ENCODE measurements at regions of chr12 and their contacts with region 1.

Region 1: DNA sequence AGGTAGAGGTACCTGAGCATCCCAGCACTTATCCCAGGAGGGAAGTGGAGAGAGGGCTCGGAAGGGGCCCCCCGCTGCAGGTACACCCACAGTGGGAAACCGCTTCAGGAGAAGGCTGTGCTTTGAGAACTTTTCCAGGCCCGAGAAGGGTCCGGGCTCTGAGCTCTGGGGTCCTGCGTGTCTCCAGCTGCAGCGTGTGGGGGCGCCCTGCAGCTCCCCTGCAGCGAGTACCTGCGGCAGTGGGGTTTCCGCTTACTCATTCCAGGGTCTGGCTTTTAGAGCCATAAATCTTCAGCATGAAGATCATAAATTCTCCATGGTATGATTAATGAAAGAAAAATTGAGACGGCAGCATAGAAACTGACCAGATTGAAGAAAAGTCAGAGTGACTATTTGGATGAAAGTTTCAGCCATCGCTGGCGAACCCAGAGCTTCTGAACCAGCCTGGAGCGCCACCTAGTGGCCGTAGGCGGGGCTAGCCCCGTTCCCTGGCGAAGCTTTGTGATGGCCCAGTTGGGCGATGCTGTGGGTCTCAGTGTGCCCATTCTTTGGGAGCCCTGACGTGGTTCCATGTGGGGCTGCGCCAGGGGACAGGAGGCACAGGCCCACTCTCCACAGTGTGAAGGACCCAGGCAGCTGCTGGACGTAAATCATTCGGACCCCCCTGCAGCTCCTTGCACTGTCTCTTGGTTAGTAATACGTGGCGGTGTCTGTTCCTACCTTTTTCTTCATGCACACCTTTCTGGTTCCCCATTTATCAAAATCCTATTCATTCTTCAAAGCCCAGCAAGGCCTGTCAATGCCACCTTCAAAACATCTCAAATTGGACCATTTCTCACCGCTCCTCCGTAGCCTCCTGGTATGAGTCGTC is 198.2 kb downstream of the TSPAN9 start:
- DNase-seq: peak; percentile 40 to 84 (median 64)
- ATAC-seq: peak; percentile 58
- H3K4me3 ChIP-seq: no peak overlapping the region
- H3K4me3 Mint-ChIP-seq: peak overlapping the region; percentile 22
- H3K27ac ChIP-seq: no peak overlapping the region
- H3K27ac Mint-ChIP-seq: no peak overlapping the region
- H3K4me1 ChIP-seq: no peaks in the 10 kb centered on the region
- H3K4me1 Mint-ChIP-seq: no peaks in the 10 kb centered on the region
- H3K27me3 ChIP-seq: no peaks in the 10 kb centered on the region
- H3K27me3 Mint-ChIP-seq: peaks cover 21% of the 10 kb centered on the region
- CTCF ChIP-seq: peak; percentile 89

Region 2: GRCh38 chr12:2845280-2845679 is 430.1 kb before region 1 on chr12:
- CTCF ChIA-PET with region 1: no interaction called
- POLR2A ChIA-PET with region 1: no interaction called
- intact Hi-C with region 1: loop called in 1 of 2 experiments (anchors 5 kb)
- DNase-seq: no peak
- ATAC-seq: no peak
- H3K4me3 ChIP-seq: no peak overlapping the region
- H3K4me3 Mint-ChIP-seq: no peak overlapping the region
- H3K27ac ChIP-seq: no peak overlapping the region
- H3K27ac Mint-ChIP-seq: no peak overlapping the region
- H3K4me1 ChIP-seq: no peaks in the 10 kb centered on the region
- H3K4me1 Mint-ChIP-seq: peaks cover 4% of the 10 kb centered on the region
- H3K27me3 ChIP-seq: no peaks in the 10 kb centered on the region
- H3K27me3 Mint-ChIP-seq: no peaks in the 10 kb centered on the region
- CTCF ChIP-seq: no peak

Region 3: DNA sequence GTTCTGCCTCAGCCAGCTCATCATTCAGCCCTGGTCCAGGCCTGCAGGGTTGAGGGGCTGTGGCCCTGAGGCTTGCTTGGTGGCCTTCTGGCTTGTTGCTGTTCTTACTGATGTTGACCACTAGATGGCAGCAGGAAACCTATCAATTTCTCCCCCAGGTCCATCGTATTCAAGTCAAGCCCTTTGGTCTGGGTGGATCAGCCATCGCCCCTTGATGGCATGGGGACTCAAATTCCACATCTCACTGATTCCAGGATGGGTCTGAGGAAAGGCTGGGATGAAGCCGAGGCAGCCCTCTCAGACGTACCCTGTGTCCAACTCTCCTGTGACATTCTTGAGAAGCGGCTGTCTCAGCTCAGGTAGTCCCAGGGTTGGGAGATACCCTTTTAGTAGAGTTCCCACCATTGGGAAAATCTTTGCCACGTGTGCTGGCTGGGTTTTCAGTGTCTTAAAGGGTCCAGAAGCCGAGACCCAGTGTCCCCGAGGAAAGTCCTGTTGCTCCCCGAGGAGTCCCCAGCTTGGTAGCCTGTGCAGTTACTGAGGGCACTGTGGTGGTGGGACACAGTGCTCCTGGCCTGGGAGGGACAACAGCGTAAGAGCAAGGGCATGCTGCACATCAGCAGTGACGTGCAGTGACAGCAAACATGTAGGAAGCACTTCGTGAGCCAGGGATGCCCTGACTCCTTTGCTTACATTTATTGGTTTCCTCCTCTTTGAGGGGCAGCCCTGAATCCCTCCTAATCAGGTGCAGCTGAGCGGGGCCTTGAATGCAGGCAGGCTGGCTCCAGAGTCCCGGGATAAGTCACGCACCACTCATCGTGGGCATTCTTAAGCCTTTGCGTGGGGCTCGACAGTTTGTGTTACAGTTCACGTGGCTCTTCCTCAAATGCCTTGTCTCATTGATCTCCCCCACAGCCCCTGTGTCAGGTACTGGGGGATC is 139.6 kb before region 1 on chr12:
- CTCF ChIA-PET with region 1: interaction called, 37 read pairs
- POLR2A ChIA-PET with region 1: no interaction called
- intact Hi-C with region 1: loop called in 1 of 2 experiments (anchors 1 kb)
- DNase-seq: peak in 7 of 9 experiments; percentile 3 to 72 (median 34)
- ATAC-seq: peak; percentile 49
- H3K4me3 ChIP-seq: no peak overlapping the region
- H3K4me3 Mint-ChIP-seq: no peak overlapping the region
- H3K27ac ChIP-seq: no peak overlapping the region
- H3K27ac Mint-ChIP-seq: no peak overlapping the region
- H3K4me1 ChIP-seq: no peaks in the 10 kb centered on the region
- H3K4me1 Mint-ChIP-seq: peaks cover 3% of the 10 kb centered on the region
- H3K27me3 ChIP-seq: peaks cover 3 to 5% of the 10 kb centered on the region in 2 experiments
- H3K27me3 Mint-ChIP-seq: peaks cover 50% of the 10 kb centered on the region
- CTCF ChIP-seq: peak; percentile 78

Region 4: GRCh38 chr12:3213188-3213587 is 62.2 kb before region 1 on chr12:
- CTCF ChIA-PET with region 1: no interaction called
- POLR2A ChIA-PET with region 1: no interaction called
- intact Hi-C with region 1: no loop called
- DNase-seq: no peak
- ATAC-seq: no peak
- H3K4me3 ChIP-seq: no peak overlapping the region
- H3K4me3 Mint-ChIP-seq: no peak overlapping the region
- H3K27ac ChIP-seq: no peak overlapping the region
- H3K27ac Mint-ChIP-seq: no peak overlapping the region
- H3K4me1 ChIP-seq: no peaks in the 10 kb centered on the region
- H3K4me1 Mint-ChIP-seq: no peaks in the 10 kb centered on the region
- H3K27me3 ChIP-seq: no peaks in the 10 kb centered on the region
- H3K27me3 Mint-ChIP-seq: no peaks in the 10 kb centered on the region
- CTCF ChIP-seq: no peak

Region 5: DNA sequence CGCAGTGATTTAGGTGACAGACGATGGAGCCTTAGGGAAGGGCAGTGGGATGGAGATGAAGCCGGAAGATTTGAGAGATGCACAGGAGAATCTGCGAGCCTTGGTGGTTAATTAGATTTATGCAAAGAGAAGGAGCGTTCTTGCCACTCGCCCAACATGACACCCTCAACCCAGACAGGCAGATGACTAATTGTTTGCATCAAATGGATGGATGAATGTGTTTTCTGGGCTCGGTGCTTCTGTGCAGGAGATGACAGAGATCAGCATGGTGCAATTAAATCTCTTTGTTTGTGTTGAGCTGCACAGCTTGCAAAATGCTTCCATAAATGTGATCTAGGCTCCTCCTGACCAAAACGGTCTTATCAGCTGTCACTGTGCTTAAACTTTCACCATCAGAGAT is 13.3 kb after region 1 on chr12:
- CTCF ChIA-PET with region 1: interaction called, 15 read pairs
- POLR2A ChIA-PET with region 1: no interaction called
- intact Hi-C with region 1: no loop called
- DNase-seq: no peak
- ATAC-seq: no peak
- H3K4me3 ChIP-seq: no peak overlapping the region
- H3K4me3 Mint-ChIP-seq: no peak overlapping the region
- H3K27ac ChIP-seq: no peak overlapping the region
- H3K27ac Mint-ChIP-seq: peak overlapping the region; percentile 49
- H3K4me1 ChIP-seq: no peaks in the 10 kb centered on the region
- H3K4me1 Mint-ChIP-seq: no peaks in the 10 kb centered on the region
- H3K27me3 ChIP-seq: no peaks in the 10 kb centered on the region
- H3K27me3 Mint-ChIP-seq: no peaks in the 10 kb centered on the region
- CTCF ChIP-seq: no peak

Region 6: GRCh38 chr12:3554371-3555115 is 279.1 kb after region 1 on chr12:
- CTCF ChIA-PET with region 1: no interaction called
- POLR2A ChIA-PET with region 1: no interaction called
- intact Hi-C with region 1: no loop called
- DNase-seq: no peak
- ATAC-seq: no peak
- H3K4me3 ChIP-seq: no peak overlapping the region
- H3K4me3 Mint-ChIP-seq: no peak overlapping the region
- H3K27ac ChIP-seq: no peak overlapping the region
- H3K27ac Mint-ChIP-seq: no peak overlapping the region
- H3K4me1 ChIP-seq: no peaks in the 10 kb centered on the region
- H3K4me1 Mint-ChIP-seq: no peaks in the 10 kb centered on the region
- H3K27me3 ChIP-seq: no peaks in the 10 kb centered on the region
- H3K27me3 Mint-ChIP-seq: peaks cover 26% of the 10 kb centered on the region
- CTCF ChIP-seq: no peak

Region 7: DNA sequence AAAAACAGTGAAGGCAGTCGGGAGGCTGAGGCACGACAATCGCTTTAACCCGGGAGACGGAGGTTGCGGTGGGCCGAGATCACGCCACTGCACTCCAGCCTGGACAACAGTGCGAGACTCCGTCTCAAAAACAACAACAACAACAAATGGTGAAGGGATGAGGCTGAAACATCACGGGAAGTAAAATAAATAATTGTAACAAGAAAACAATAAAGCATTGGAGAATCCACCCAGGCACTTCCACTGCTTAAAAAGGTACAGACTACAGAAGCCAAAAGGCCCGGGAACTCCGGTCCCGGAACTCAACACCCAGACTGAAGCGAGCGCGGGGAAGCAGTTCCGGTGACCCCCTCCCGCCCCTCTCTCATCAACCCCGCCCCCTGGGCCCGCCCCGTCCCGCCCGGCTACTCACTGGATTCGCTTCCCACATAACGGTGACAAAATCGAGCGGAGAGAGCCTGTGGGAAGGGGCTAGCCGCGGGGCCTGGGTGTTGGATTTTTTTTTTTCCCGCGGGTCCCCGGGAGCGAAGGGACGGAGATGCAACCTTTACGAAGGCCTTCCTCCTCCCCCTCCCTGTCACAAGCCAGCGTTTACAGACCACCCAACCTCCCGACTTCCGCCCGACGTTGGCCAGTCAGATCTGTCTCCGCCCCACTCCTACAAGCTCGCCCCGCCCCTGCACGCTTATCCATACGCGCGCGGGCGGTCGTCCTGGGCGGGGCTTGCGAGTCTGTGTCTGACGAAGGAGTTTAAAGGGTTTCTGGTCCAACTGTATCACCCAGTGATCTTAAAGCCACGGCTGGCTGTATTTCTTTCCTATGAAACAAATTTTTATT is 597.6 kb after region 1 on chr12 and contains the start of gene PARP11:
- CTCF ChIA-PET with region 1: no interaction called
- POLR2A ChIA-PET with region 1: no interaction called
- intact Hi-C with region 1: no loop called
- DNase-seq: peak; percentile 95 to 99 (median 98)
- ATAC-seq: peak; percentile 96
- H3K4me3 ChIP-seq: peak within 1 kb of the TSS; percentile 64 to 80
- H3K4me3 Mint-ChIP-seq: peak within 1 kb of the TSS; percentile 97
- H3K27ac ChIP-seq: peak within 1 kb of the TSS; percentile 88 to 97
- H3K27ac Mint-ChIP-seq: peak within 1 kb of the TSS; percentile 99
- H3K4me1 ChIP-seq: peaks cover 45% of the 10 kb centered on the region
- H3K4me1 Mint-ChIP-seq: peaks cover 47% of the 10 kb centered on the region
- H3K27me3 ChIP-seq: no peaks in the 10 kb centered on the region
- H3K27me3 Mint-ChIP-seq: no peaks in the 10 kb centered on the region
- CTCF ChIP-seq: no peak
- total RNA-seq, gene PARP11: 11.5 to 11.8 TPM

Region 8: DNA sequence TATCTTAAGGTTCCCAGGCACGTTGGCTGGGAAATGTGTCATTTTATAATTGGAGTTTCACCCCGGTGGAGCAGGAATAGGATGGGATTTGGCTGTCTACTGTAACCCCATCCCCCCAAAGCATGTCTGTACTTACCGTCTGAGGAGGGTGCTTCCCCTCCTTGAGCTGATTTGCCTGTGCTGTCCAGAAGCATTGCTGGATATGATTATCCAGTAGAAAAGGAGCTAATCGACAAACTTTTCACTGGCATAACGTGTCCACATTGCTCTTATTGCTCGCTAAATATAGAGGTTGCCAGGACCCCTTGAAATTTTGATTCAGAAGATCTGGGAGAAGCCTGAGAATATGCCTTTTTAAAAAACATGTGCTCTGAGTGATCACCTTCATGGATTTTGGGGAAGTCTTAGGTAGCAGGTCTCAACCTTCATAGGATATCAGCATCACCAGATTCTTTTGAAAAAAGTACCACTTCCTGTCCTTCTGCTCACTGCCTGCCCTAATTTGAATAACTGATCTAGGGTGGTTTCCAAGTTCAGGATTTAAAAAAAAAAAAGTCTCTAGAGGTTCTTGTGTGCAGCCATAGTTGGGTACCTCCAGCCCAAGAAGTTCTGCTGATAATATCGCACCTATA is 1553.9 kb after region 1 on chr12:
- CTCF ChIA-PET with region 1: no interaction called
- POLR2A ChIA-PET with region 1: no interaction called
- intact Hi-C with region 1: no loop called
- DNase-seq: peak in 2 of 9 experiments; percentile 55 to 74
- ATAC-seq: peak; percentile 82
- H3K4me3 ChIP-seq: peak overlapping the region; percentile 11 to 20
- H3K4me3 Mint-ChIP-seq: peak overlapping the region; percentile 65
- H3K27ac ChIP-seq: no peak overlapping the region
- H3K27ac Mint-ChIP-seq: peak overlapping the region; percentile 66
- H3K4me1 ChIP-seq: peaks cover 50% of the 10 kb centered on the region
- H3K4me1 Mint-ChIP-seq: peaks cover 60% of the 10 kb centered on the region
- H3K27me3 ChIP-seq: no peaks in the 10 kb centered on the region
- H3K27me3 Mint-ChIP-seq: no peaks in the 10 kb centered on the region
- CTCF ChIP-seq: no peak